ENCODE measurements at regions of chr6 and their contacts with region 1.

Region 1: GRCh38 chr6:157339432-157339831 is 16.1 kb upstream of the TMEM242 start:
- DNase-seq: no peak
- ATAC-seq: peak; percentile 28 to 49 (median 38)
- H3K4me3 ChIP-seq: no peak overlapping the region
- H3K27ac ChIP-seq: no peak overlapping the region
- H3K4me1 ChIP-seq: no peaks in the 10 kb centered on the region
- H3K27me3 ChIP-seq: no peaks in the 10 kb centered on the region
- CTCF ChIP-seq: peak; percentile 20 to 41 (median 31)
- POLR2A ChIP-seq: no peak

Region 2: GRCh38 chr6:157221007-157221816 is 118.2 kb before region 1 on chr6:
- intact Hi-C with region 1: no loop called
- DNase-seq: peak; percentile 85 to 89 (median 86)
- ATAC-seq: peak; percentile 81 to 92 (median 90)
- H3K4me3 ChIP-seq: peak overlapping the region; percentile 0 to 42 (median 37)
- H3K27ac ChIP-seq: no peak overlapping the region
- H3K4me1 ChIP-seq: no peaks in the 10 kb centered on the region
- H3K27me3 ChIP-seq: no peaks in the 10 kb centered on the region
- CTCF ChIP-seq: peak in 2 of 4 donors; percentile 19 to 21
- POLR2A ChIP-seq: no peak

Region 3: DNA sequence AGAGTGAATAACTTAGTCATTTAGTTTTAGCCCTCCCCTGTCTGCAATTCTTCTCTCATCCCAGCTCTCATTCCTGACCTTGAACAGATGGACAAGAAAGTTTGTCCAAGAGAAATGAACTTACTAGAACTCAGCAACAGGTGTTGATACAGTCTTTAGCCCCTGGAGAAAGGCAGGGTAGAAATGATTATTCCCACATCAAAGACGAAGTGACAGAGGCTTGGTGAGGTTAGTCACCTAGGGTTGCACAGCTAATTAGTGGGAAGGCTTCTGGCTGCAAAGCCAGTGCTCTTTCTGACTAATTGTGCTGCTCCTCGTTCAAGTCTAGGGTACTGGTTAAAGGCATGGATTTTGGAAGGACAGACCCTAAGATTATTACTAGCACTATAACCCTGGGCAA is 46.0 kb after region 1 on chr6:
- intact Hi-C with region 1: no loop called
- DNase-seq: no peak
- ATAC-seq: no peak
- H3K4me3 ChIP-seq: no peak overlapping the region
- H3K27ac ChIP-seq: no peak overlapping the region
- H3K4me1 ChIP-seq: peaks cover 0 to 9% (median 8%) of the 10 kb centered on the region in 4 donors
- H3K27me3 ChIP-seq: no peaks in the 10 kb centered on the region
- CTCF ChIP-seq: no peak
- POLR2A ChIP-seq: no peak

Region 4: DNA sequence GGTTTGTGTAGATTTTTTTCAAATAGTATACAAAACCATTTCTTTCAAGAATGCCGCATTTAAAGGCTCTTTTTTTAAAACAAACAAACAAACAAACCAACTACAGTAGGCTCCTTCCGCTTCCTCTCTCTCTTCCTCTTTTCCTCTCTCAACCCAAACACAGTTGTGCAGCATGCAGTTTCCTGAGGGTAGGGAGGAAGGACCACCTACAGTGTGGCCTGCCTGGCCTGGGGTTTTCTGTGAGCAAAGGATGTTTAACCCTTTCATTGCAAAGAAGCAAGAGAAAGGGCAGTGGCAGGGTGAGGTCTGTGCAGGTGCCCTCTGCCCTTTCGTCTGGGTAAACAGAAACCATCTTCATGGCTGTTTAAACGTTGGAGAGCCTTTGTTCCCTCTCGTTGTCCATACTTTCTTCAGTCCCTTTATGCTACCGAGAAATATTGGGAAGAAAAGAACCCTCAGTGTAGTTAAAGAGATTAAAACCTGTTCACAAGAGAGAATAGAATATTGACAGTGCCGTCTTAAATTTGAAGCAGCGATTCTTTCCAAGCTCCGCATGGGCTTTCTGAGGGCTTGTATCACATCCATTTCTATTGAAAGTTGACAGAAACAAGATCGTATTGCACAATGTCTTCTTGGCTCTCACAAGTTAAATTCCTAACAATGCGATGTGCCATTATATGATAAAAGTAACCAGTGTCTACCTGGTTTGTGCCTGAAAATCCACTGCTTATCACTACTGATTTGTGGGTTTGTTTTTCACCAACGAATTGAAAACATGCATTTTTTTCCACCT is 268.1 kb after region 1 on chr6:
- intact Hi-C with region 1: loop called in 1 of 2 experiments (anchors 10 kb)
- DNase-seq: peak in 1 of 3 donors; percentile 20
- ATAC-seq: peak in 1 of 4 donors; percentile 34
- H3K4me3 ChIP-seq: no peak overlapping the region
- H3K27ac ChIP-seq: no peak overlapping the region
- H3K4me1 ChIP-seq: no peaks in the 10 kb centered on the region
- H3K27me3 ChIP-seq: no peaks in the 10 kb centered on the region
- CTCF ChIP-seq: no peak
- POLR2A ChIP-seq: no peak

Region 5: GRCh38 chr6:157667211-157668008 is 328.0 kb after region 1 on chr6:
- intact Hi-C with region 1: loop called in 1 of 2 experiments (anchors 10 kb)
- DNase-seq: peak in 1 of 3 donors; percentile 61
- ATAC-seq: peak; percentile 85 to 90 (median 90)
- H3K4me3 ChIP-seq: no peak overlapping the region
- H3K27ac ChIP-seq: no peak overlapping the region
- H3K4me1 ChIP-seq: no peaks in the 10 kb centered on the region
- H3K27me3 ChIP-seq: no peaks in the 10 kb centered on the region
- CTCF ChIP-seq: peak; percentile 78 to 87 (median 86)
- POLR2A ChIP-seq: no peak

Measured in right lobe of liver (tissue), 6 donors.